SK-N-SH (cell line): ENCODE measurements at regions of chr15 and their contacts with region 1.

Region 1: DNA sequence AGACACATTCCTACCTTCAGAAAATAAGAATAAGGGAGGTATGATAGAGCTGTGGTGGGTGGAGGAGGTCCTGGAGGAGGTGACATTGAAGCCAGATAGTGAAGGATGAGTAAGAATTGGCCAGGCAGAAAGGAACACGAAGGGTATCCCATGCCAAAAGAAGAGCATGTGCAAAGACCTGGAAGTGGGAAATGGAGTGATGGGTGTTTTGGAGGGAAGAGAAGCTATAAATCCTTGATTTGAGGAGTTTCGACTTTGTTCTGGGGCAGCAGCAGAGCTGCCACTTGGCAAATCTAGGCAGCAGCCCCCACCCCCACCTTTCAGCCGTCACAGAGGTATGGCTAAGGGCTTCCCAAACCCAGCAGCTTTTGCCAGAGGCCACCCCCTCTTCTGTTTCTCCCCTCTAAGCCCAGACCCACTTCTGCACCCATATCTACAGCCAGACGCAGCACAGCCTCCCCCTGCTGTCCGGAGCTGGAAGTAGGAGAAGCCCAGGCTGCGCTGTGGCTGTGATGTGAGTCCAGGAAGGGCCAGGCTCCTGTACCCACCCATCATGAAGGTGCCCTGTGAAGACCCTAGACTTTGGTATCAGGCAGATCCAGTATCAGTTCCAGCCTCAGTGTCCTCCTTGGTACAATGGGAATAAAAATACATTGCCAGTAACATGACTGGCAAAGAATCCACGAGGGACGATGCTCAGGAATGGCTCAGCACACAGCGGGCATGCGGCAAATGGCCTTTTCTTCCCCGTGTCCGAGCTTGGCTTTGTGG is 188.7 kb upstream of the LINGO1 start:
- DNase-seq: peak; percentile 88
- H3K4me3 ChIP-seq: no peak overlapping the region; a peak in 1 of 4 replicates
- H3K27ac ChIP-seq: no peak overlapping the region
- H3K4me1 ChIP-seq: peaks cover 0 to 17% of the 10 kb centered on the region in 2 experiments; a peak in 1 of 4 replicates
- H3K27me3 ChIP-seq: peaks cover 38% of the 10 kb centered on the region
- CTCF ChIP-seq: peak; percentile 80
- EP300 ChIP-seq: no peak
- RAD21 ChIP-seq: peak; percentile 92

Region 2: GRCh38 chr15:77642793-77643430 is 178.5 kb before region 1 on chr15:
- CTCF ChIA-PET with region 1: interaction called, 458 read pairs
- POLR2A ChIA-PET with region 1: interaction called, 7 read pairs
- DNase-seq: peak; percentile 62
- H3K4me3 ChIP-seq: no peak overlapping the region
- H3K27ac ChIP-seq: peak overlapping the region in 1 of 2 experiments; percentile 16; a peak in 1 of 4 replicates
- H3K4me1 ChIP-seq: peaks cover 0 to 31% of the 10 kb centered on the region in 2 experiments; a peak in 1 of 4 replicates
- H3K27me3 ChIP-seq: peaks cover 7% of the 10 kb centered on the region; the same call in 1 of the 2 replicates
- CTCF ChIP-seq: no peak
- EP300 ChIP-seq: no peak
- RAD21 ChIP-seq: no peak

Region 3: DNA sequence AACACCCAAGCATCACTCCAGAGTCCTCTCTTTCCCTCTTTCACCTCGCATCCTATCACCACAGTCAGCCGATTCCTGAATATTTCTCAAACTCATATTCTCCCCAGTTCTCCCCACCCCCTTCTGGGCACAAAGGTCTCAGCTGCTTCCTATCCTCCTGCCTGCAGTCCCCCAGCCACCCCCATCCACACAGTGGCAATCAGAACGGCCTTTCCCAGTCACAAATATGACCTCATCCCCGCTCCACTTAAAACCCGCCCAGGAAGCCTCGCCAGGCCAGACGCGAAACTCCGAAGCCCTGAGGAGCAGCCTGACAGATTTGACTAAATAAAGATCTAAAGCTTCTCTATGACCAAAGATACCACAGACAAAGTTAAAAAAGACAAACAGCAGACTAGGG is 138.8 kb before region 1 on chr15:
- CTCF ChIA-PET with region 1: interaction called, 10 read pairs
- POLR2A ChIA-PET with region 1: no interaction called
- DNase-seq: no peak
- H3K4me3 ChIP-seq: no peak overlapping the region
- H3K27ac ChIP-seq: no peak overlapping the region
- H3K4me1 ChIP-seq: no peaks in the 10 kb centered on the region
- H3K27me3 ChIP-seq: no peaks in the 10 kb centered on the region; the same call in 1 of the 2 replicates
- CTCF ChIP-seq: no peak
- EP300 ChIP-seq: no peak
- RAD21 ChIP-seq: no peak

Region 4: DNA sequence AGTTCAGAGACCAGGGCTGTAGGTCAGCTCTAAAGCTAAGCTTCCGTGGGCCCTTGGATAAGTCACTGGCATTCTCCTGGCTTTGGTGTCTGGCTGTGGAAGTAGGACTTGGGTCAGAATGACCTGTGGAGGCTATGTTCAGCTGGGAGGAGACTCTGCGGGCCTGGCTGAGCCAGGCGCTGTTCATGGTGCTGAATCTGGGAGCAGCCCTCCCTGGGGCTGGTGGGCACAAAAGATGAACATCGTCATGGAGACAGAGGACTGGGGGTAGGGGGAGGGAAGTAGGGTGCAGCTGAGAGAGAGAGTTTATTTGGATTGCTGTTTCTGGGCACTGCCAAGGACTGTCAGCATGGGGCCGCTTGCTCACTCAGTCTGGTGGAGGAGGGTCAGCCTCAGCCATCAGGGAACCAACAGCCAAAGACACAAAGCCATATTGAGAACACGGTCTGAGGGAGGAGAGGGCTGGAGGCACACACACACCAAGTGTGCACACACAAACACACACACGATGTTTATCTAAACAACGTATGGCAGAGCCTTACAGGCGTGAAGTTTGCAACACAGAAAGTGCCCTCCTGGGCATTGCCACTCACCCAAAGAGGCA is 68.0 kb before region 1 on chr15:
- CTCF ChIA-PET with region 1: interaction called, 14 read pairs
- POLR2A ChIA-PET with region 1: no interaction called
- DNase-seq: no peak
- H3K4me3 ChIP-seq: no peak overlapping the region
- H3K27ac ChIP-seq: no peak overlapping the region
- H3K4me1 ChIP-seq: no peaks in the 10 kb centered on the region; a peak in 1 of 4 replicates
- H3K27me3 ChIP-seq: no peaks in the 10 kb centered on the region
- CTCF ChIP-seq: no peak
- EP300 ChIP-seq: no peak
- RAD21 ChIP-seq: no peak

Region 5: DNA sequence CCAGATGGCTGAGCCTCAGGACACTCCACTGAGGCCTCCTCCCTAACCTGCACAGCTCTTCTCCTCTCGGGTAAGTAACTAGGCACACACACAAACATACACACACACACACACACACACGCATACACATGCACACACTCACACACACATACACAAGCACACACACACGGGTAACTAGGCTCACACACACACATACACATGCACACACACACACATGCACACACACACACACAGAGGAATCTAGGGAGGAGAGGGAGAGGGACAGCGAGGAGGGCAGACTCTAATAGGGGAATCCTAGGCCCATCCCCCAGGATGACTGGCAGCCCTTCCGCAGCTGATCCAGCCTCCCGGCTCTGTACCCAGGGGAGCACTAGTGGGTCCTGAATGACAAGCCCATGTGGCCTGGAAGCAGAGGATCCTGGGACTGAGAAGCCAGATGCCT is 11.2 kb before region 1 on chr15:
- CTCF ChIA-PET with region 1: interaction called, 37 read pairs
- POLR2A ChIA-PET with region 1: no interaction called
- DNase-seq: no peak
- H3K4me3 ChIP-seq: no peak overlapping the region
- H3K27ac ChIP-seq: no peak overlapping the region
- H3K4me1 ChIP-seq: peaks cover 0 to 12% of the 10 kb centered on the region in 2 experiments; a peak in 1 of 4 replicates
- H3K27me3 ChIP-seq: no peaks in the 10 kb centered on the region; the same call in 1 of the 2 replicates
- CTCF ChIP-seq: no peak
- EP300 ChIP-seq: no peak
- RAD21 ChIP-seq: no peak

Region 6: GRCh38 chr15:77870195-77871065 is 49.1 kb after region 1 on chr15:
- CTCF ChIA-PET with region 1: interaction called, 15 read pairs
- POLR2A ChIA-PET with region 1: no interaction called
- DNase-seq: peak; percentile 81
- H3K4me3 ChIP-seq: peak overlapping the region in 1 of 2 experiments; percentile 17; a peak in 1 of 4 replicates
- H3K27ac ChIP-seq: no peak overlapping the region
- H3K4me1 ChIP-seq: peaks cover 5 to 7% of the 10 kb centered on the region in 2 experiments; a peak in 3 of 4 replicates
- H3K27me3 ChIP-seq: no peaks in the 10 kb centered on the region
- CTCF ChIP-seq: peak; percentile 63
- EP300 ChIP-seq: no peak
- RAD21 ChIP-seq: peak; percentile 65

Region 7: GRCh38 chr15:77944002-77944867 is 122.9 kb after region 1 on chr15:
- CTCF ChIA-PET with region 1: no interaction called
- POLR2A ChIA-PET with region 1: no interaction called
- DNase-seq: peak; percentile 41
- H3K4me3 ChIP-seq: no peak overlapping the region
- H3K27ac ChIP-seq: no peak overlapping the region
- H3K4me1 ChIP-seq: peaks cover 0 to 2% of the 10 kb centered on the region in 2 experiments; a peak in 1 of 4 replicates
- H3K27me3 ChIP-seq: no peaks in the 10 kb centered on the region
- CTCF ChIP-seq: no peak
- EP300 ChIP-seq: no peak
- RAD21 ChIP-seq: no peak